ENCODE measurements at regions of chr5 and their contacts with region 1.

Region 1: DNA sequence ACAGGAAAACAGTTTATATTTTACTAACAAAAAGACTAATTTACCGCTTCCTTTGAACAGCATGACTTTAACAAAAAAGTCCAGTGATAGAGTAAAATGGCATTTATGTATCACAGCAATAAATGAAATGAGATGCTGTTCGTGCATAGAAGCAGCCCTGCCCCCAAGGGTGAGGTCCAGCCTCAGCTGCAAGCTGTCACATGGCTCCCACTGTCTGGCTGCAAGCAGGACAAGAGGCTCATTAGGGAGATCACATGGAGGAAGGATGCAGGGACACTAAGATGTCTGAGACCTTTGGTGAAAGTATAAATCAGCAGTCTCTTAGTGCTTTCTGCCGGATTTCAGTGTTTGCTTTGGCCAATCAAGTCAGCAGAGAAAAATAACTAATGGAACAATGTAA is 23.0 kb downstream of the GDNF start:
- DNase-seq: no peak
- H3K4me3 ChIP-seq: no peak overlapping the region
- H3K27ac ChIP-seq: no peak overlapping the region
- H3K4me1 ChIP-seq: no peaks in the 10 kb centered on the region
- H3K27me3 ChIP-seq: no peaks in the 10 kb centered on the region
- CTCF ChIP-seq: no peak
- POLR2A ChIP-seq: no peak

Region 2: GRCh38 chr5:37757980-37758583 is 58.8 kb before region 1 on chr5:
- intact Hi-C with region 1: loop called (anchors 2 kb)
- DNase-seq: no peak
- H3K4me3 ChIP-seq: no peak overlapping the region
- H3K27ac ChIP-seq: no peak overlapping the region
- H3K4me1 ChIP-seq: no peaks in the 10 kb centered on the region
- H3K27me3 ChIP-seq: no peaks in the 10 kb centered on the region
- CTCF ChIP-seq: no peak
- POLR2A ChIP-seq: no peak